Dendritic cell treated with granulocyte-macrophage colony-stimulating factor and Interleukin-4, amounts not matched to agents 40 ng/mL and 50 ng/mL, for 4 days (primary cell): ENCODE measurements at regions of chr10 and their contacts with region 1.

Region 1: GRCh38 chr10:7818295-7819122 is at the start of gene TAF3:
- H3K4me3 Mint-ChIP-seq: peak within 1 kb of the TSS; percentile 92
- H3K27ac Mint-ChIP-seq: peak within 1 kb of the TSS; percentile 76
- H3K4me1 Mint-ChIP-seq: peaks cover 29% of the 10 kb centered on the region
- H3K27me3 Mint-ChIP-seq: peaks cover 3% of the 10 kb centered on the region

Region 2: GRCh38 chr10:7787857-7788638 is 30.5 kb before region 1 on chr10 and contains the starts of genes ATP5F1C and KIN:
- intact Hi-C with region 1: loop called (anchors 1 kb)
- H3K4me3 Mint-ChIP-seq: no peak within 1 kb of the TSS
- H3K27ac Mint-ChIP-seq: no peak within 1 kb of the TSS
- H3K4me1 Mint-ChIP-seq: peaks cover 51% of the 10 kb centered on the region
- H3K27me3 Mint-ChIP-seq: no peaks in the 10 kb centered on the region

Region 3: GRCh38 chr10:7915923-7916536 is 97.5 kb after region 1 on chr10:
- intact Hi-C with region 1: no loop called
- H3K4me3 Mint-ChIP-seq: no peak overlapping the region
- H3K27ac Mint-ChIP-seq: no peak overlapping the region
- H3K4me1 Mint-ChIP-seq: no peaks in the 10 kb centered on the region
- H3K27me3 Mint-ChIP-seq: no peaks in the 10 kb centered on the region